Activated CD4-positive, alpha-beta T cell treated with anti-CD3 and anti-CD28 coated beads, Interleukin-2, amount 10 ng/mL, durations not matched to agents 24 days and 14 days (primary cell): ENCODE measurements at regions of chr1 and their contacts with region 1.

Region 1: GRCh38 chr1:114346480-114347029 is 164.4 kb downstream of the TRIM33 start:
- DNase-seq: peak; percentile 100
- H3K4me3 Mint-ChIP-seq: peak overlapping the region; percentile 86
- H3K27ac Mint-ChIP-seq: peak overlapping the region; percentile 84
- H3K4me1 Mint-ChIP-seq: peaks cover 14% of the 10 kb centered on the region
- H3K27me3 Mint-ChIP-seq: no peaks in the 10 kb centered on the region

Region 2: GRCh38 chr1:113963281-113963906 is 383.2 kb before region 1 on chr1:
- intact Hi-C with region 1: no loop called
- DNase-seq: no peak
- H3K4me3 Mint-ChIP-seq: no peak overlapping the region
- H3K27ac Mint-ChIP-seq: peak overlapping the region; percentile 14
- H3K4me1 Mint-ChIP-seq: peaks cover 5% of the 10 kb centered on the region
- H3K27me3 Mint-ChIP-seq: no peaks in the 10 kb centered on the region

Region 3: DNA sequence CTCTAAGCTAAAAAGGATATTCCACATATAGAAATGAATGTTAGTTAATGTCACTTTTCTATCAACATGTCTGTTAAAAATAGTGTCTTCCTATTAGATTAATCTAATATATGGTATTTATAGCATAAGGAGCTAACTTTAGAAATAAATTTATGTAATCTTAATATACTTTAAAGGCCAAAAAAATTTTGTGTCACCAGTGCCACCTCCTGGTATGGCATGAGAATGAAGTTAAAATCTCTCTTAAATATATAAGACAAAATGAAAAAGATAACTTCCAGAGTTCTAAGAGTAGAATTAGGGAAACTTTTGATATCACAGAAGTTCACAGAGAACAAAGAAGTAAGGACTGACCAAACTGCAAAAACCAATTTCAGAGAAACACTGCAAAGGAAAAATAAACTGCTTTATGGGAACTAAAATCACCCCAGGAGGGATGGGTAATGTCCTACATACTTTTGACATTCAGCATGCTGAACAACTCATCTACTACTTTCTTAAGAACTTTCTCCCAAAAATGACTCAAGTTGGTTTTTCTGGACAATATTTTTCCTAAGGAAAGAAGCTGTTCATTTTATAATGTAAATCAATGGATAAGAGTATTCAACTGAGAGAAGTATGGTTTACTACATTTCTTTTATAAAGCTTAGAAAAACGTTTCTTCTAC is 81.7 kb after region 1 on chr1:
- intact Hi-C with region 1: loop called (anchors 1 kb)
- DNase-seq: no peak
- H3K4me3 Mint-ChIP-seq: no peak overlapping the region
- H3K27ac Mint-ChIP-seq: no peak overlapping the region
- H3K4me1 Mint-ChIP-seq: peaks cover 7% of the 10 kb centered on the region
- H3K27me3 Mint-ChIP-seq: no peaks in the 10 kb centered on the region

Region 4: DNA sequence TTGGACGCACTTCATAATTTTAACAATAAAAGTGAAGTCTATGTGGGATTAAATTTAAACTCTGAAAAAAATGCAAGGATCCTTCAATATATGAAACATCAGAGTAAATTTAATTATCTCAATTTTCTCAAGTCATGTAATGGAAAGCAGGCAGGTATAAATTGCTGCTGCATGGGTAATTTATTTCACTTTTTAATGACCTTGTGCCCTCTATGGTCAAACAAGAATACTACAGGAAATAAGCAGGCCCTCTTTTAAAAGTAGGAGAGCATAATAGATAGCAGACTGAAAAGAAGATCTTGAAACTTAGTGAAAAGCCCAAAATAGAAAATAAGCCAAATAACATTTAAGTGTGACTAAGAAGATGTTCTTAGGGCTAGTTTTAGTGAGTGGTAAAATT is 212.0 kb after region 1 on chr1:
- intact Hi-C with region 1: loop called (anchors 1 kb)
- DNase-seq: no peak
- H3K4me3 Mint-ChIP-seq: no peak overlapping the region
- H3K27ac Mint-ChIP-seq: no peak overlapping the region
- H3K4me1 Mint-ChIP-seq: peaks cover 3% of the 10 kb centered on the region
- H3K27me3 Mint-ChIP-seq: no peaks in the 10 kb centered on the region

Region 5: GRCh38 chr1:114581335-114582287 is 235.1 kb after region 1 on chr1 and contains the start of gene BCAS2:
- intact Hi-C with region 1: loop called (anchors 1 kb)
- DNase-seq: peak; percentile 98
- H3K4me3 Mint-ChIP-seq: peak within 1 kb of the TSS; percentile 95
- H3K27ac Mint-ChIP-seq: peak within 1 kb of the TSS; percentile 93
- H3K4me1 Mint-ChIP-seq: peaks cover 19% of the 10 kb centered on the region
- H3K27me3 Mint-ChIP-seq: peaks cover 9% of the 10 kb centered on the region
- total RNA-seq, gene BCAS2: 63.5 and 64.0 TPM in 2 replicates

Region 6: GRCh38 chr1:114670083-114671010 is 323.8 kb after region 1 on chr1:
- intact Hi-C with region 1: loop called (anchors 1 kb)
- DNase-seq: peak; percentile 94
- H3K4me3 Mint-ChIP-seq: peak overlapping the region; percentile 94
- H3K27ac Mint-ChIP-seq: peak overlapping the region; percentile 25
- H3K4me1 Mint-ChIP-seq: peaks cover 10% of the 10 kb centered on the region
- H3K27me3 Mint-ChIP-seq: peaks cover 52% of the 10 kb centered on the region

Region 7: GRCh38 chr1:115052454-115053083 is 706.0 kb after region 1 on chr1:
- intact Hi-C with region 1: loop called (anchors 1 kb)
- DNase-seq: peak; percentile 85
- H3K4me3 Mint-ChIP-seq: no peak overlapping the region
- H3K27ac Mint-ChIP-seq: no peak overlapping the region
- H3K4me1 Mint-ChIP-seq: peaks cover 7% of the 10 kb centered on the region
- H3K27me3 Mint-ChIP-seq: peaks cover 8% of the 10 kb centered on the region